Dorsolateral prefrontal cortex (tissue), 120 donors: ENCODE measurements at regions of chr6 and their contacts with region 1.

Region 1: DNA sequence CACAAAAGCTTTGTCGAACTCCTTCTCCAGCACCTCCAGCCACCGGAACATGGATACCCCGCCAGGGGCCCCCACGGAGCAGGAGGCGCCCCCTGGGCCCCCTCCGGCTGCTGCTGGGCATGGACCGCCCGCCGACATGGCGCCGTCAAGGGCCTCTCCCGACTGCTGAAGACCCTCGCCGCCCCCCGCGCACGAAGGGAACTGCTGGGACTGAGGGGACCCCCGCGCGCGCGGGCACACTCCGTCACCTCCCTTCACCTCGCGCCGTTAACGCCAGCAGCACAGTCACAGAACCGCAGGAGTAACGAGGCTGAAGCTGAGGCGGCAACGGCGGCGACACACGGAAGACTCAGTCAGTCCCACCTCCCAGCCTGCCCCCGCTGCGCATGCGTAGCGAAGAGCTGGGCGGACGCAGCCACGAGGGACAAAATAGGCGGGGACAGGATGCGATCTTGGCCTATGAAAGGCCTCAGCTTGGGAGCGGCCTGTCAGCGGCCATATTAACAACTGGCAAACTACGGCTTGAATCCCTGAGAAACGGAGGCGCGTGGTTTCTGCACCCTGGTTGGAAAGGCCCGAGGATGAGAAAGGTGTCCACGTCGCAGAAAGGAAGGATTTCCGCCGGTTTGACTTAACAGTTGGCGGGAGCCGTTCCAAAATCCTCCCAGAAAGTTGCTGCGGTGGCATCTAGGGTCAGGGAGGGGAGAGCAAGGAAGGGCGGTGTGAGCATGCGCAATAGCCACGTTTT is at the start of gene GOPC:
- DNase-seq: peak; percentile 91 to 97 (median 96)
- H3K4me3 ChIP-seq: peak within 1 kb of the TSS; percentile 77 to 100 (median 95)
- H3K27ac ChIP-seq: peak within 1 kb of the TSS; percentile 58 to 99 (median 95)
- H3K27me3 ChIP-seq: no peaks in the 10 kb centered on the region
- CTCF ChIP-seq: peak in 36 of 56 donors; percentile 4 to 61 (median 23)
- total RNA-seq, gene GOPC: 15.4 to 48.0 (median 36.0) TPM

Region 2: DNA sequence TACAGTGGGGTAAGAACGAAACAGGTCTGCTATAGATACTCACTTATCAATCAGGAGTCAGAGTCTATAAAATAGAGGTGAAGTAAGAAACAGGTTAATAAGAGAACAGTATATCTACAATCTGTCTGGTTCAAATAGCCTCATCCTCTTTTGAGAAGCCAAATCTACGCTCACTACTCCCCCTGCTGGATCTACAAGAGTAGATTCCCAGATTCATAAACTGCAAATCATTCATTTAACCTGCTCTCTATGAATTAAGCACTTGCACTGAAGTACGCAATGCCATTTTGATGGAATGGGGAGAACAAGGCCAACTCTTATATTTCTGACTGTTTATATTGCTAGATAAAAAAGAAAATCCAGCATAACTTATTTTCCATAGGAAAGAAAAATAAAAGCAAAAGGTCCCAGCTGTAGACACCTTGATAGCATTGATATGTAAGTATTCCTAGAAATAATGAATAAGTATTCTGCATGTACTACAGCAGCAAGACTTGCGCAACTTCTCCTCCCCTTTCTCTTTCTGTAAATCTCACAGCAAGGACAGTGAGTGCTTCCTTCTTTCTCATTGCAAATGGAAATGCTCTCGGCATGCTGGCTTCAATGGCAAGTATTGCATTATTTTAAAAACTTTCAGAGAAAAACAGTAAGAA is 633.0 kb before region 1 on chr6:
- intact Hi-C with region 1: loop called in 1 of 2 experiments (anchors 10 kb)
- DNase-seq: peak in 1 of 10 donors; percentile 4
- H3K4me3 ChIP-seq: no peak overlapping the region
- H3K27ac ChIP-seq: no peak overlapping the region
- H3K27me3 ChIP-seq: peaks cover 0 to 36% (median 7%) of the 10 kb centered on the region in 45 donors
- CTCF ChIP-seq: peak in 55 of 56 donors; percentile 45 to 79 (median 70)

Region 3: GRCh38 chr6:117449549-117450439 is 152.5 kb before region 1 on chr6:
- intact Hi-C with region 1: loop called in 1 of 2 experiments (anchors 2 kb)
- DNase-seq: peak in 5 of 10 donors; percentile 22 to 53 (median 26)
- H3K4me3 ChIP-seq: peak overlapping the region in 4 of 59 donors; percentile 6 to 16 (median 13)
- H3K27ac ChIP-seq: no peak overlapping the region
- H3K27me3 ChIP-seq: no peaks in the 10 kb centered on the region
- CTCF ChIP-seq: peak; percentile 63 to 94 (median 80)

Region 4: GRCh38 chr6:117549611-117550010 is 52.7 kb before region 1 on chr6:
- intact Hi-C with region 1: loop called in 1 of 2 experiments (anchors 5 kb)
- DNase-seq: no peak
- H3K4me3 ChIP-seq: peak overlapping the region in 1 of 59 donors; percentile 71
- H3K27ac ChIP-seq: no peak overlapping the region
- H3K27me3 ChIP-seq: no peaks in the 10 kb centered on the region
- CTCF ChIP-seq: no peak

Region 5: DNA sequence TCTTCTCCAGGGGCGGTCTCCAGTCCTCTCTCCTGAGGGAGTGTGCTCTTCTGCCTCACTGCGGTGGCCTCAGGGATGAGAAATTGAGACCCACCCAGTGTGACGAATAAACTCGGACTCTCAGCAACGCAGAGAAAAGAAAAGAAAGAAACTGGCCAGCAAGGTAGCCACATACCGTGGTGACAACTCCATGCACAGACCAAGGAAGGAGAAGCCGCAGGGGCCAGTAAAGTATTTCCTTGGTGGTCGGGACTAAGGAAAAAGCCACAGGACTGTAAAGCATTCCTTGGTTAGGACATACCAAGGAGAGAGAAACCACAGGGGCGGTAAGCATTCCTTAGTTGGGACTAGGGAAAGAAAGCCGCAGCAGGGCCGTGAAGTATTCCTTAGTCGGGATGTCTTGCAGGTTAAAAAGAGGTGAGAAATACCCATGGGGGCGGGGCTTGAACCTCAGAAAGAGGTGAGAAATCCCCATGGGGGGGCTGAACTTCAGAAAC is 13.6 kb after region 1 on chr6:
- intact Hi-C with region 1: no loop called
- DNase-seq: no peak
- H3K4me3 ChIP-seq: no peak overlapping the region
- H3K27ac ChIP-seq: no peak overlapping the region
- H3K27me3 ChIP-seq: no peaks in the 10 kb centered on the region
- CTCF ChIP-seq: no peak

Region 6: DNA sequence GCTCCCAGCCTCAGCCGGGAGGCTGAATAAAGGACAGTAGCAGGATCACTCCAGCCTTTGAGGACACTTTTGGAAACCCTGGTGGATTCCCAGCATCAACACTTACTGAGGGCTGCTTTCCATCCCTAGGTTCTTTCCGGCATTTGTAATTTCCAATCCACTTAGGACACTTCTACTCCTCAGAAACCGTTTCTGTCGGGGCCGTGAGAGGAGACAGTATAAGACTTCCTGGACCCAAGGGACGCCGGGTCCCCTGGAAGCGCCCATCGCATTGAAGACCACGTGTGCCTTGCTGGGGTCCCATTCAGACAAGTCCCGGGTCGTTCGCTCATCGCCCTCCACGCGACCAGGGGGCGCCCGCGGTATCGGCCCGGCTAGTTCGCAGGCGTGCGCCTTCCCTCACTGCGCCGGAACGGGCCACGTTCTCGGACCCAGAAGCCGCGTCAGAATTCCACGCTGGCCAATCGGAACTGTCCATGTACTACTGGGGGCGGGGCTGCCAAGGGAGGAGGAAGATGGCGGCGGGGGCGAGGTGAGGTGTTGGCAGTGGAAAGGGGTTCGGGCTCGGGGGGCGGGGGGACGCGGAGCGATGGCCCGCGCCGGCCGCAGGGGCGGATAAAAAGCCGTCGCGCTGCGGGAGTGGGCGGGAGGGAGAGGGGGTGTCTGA is 72.8 kb after region 1 on chr6 and contains the start of gene NUS1:
- intact Hi-C with region 1: loop called (anchors 2 to 5 kb)
- DNase-seq: peak; percentile 96 to 99 (median 98)
- H3K4me3 ChIP-seq: peak within 1 kb of the TSS; percentile 30 to 94 (median 77)
- H3K27ac ChIP-seq: peak within 1 kb of the TSS in 43 of 59 donors; percentile 2 to 85 (median 66)
- H3K27me3 ChIP-seq: no peaks in the 10 kb centered on the region
- CTCF ChIP-seq: peak; percentile 39 to 94 (median 85)
- total RNA-seq, gene NUS1: 15.8 to 34.5 (median 24.9) TPM